ENCODE measurements at regions of chr1 and their contacts with region 1.

Region 1: DNA sequence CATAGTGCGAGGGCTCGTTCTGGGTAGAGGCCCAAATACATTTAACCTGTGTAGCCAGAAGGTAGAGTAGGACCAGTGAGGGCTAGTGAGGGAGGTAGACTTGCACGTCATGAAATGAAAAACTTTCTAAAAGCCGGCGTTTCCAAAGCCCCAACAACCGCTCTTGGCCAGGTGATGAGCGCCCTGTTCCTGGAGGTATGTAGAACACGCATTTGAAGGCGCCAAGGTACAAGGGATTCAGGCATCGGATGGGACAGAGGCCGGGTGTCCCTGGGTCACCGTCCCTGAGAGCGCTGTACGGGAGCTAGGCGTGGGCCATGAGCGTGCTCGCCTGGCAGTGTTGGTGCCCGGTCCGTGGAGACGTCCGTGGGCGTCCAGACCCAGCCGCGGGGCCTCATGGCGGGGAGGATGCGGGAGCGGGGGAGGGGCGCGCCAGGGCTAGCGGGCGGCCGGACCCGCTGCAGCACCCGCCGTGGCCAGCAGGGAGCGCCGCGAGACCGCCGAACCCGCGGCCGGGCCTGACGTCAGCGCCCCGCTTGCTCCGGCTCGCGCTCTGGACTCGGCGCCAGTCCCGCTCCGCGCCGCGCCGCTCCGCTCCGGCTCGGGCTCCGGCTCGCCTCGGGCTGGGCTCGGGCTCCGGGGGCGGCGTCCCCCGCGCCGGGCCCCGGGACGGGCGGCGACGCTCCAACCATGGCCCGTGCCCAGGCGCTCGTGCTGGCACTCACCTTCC is at the start of gene PTPRU:
- DNase-seq: peak; percentile 65
- H3K4me3 Mint-ChIP-seq: peak within 1 kb of the TSS; percentile 93
- H3K27ac Mint-ChIP-seq: peak within 1 kb of the TSS; percentile 61
- H3K4me1 Mint-ChIP-seq: peaks cover 27% of the 10 kb centered on the region
- H3K27me3 Mint-ChIP-seq: peaks cover 14% of the 10 kb centered on the region
- CTCF ChIP-seq: peak; percentile 84
- total RNA-seq, gene PTPRU: 24.1 and 26.8 TPM in 2 replicates

Region 2: GRCh38 chr1:29271724-29272123 is 35.6 kb after region 1 on chr1:
- CTCF ChIA-PET with region 1: interaction called, 3 read pairs
- POLR2A ChIA-PET with region 1: interaction called, 14 read pairs
- intact Hi-C with region 1: no loop called
- DNase-seq: peak; percentile 70
- H3K4me3 Mint-ChIP-seq: peak overlapping the region; percentile 33
- H3K27ac Mint-ChIP-seq: peak overlapping the region; percentile 76
- H3K4me1 Mint-ChIP-seq: peaks cover 18% of the 10 kb centered on the region
- H3K27me3 Mint-ChIP-seq: no peaks in the 10 kb centered on the region
- CTCF ChIP-seq: no peak

Region 3: DNA sequence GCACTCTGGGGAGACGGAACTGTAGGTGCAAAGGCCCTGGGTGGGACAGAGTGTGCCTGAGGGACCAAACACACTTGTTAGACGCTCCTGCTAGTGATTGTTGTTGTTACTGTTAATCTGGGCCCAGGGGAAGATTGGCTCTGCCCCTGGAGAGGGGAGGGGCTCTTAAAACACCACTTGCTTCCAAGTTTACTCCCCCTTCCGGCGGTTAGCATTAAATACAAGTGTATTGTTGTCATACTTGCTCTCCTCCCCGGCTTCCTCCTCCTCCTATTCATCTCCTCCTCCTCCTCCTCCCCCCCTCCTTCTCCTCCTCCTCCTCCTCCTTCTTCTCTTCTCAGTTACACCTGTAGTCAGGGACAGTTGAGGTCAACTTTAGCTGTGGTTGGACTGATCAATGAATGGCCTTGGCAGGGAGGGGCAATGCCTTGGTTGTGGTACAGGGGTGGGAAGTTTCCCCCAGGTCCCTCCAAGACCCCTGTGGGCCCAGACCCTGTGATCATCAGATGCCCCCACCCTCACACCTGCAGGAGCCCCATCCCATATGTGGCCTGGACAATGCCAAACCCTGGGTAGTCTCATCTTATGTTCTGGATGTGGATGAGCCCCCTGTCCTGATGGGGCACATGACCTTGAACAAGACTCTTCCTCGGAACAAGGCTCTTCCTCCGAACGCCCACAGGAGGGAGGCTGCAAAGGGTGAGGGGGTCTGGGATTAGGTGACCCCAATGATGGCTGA is 217.6 kb after region 1 on chr1:
- CTCF ChIA-PET with region 1: no interaction called
- POLR2A ChIA-PET with region 1: no interaction called
- intact Hi-C with region 1: loop called (anchors 1 kb)
- DNase-seq: peak; percentile 70
- H3K4me3 Mint-ChIP-seq: no peak overlapping the region
- H3K27ac Mint-ChIP-seq: no peak overlapping the region
- H3K4me1 Mint-ChIP-seq: no peaks in the 10 kb centered on the region
- H3K27me3 Mint-ChIP-seq: peaks cover 32% of the 10 kb centered on the region
- CTCF ChIP-seq: peak; percentile 33

Region 4: GRCh38 chr1:29875557-29876028 is 639.5 kb after region 1 on chr1:
- CTCF ChIA-PET with region 1: interaction called, 6 read pairs
- POLR2A ChIA-PET with region 1: interaction called, 3 read pairs
- intact Hi-C with region 1: loop called (anchors 2 kb)
- DNase-seq: peak; percentile 65
- H3K4me3 Mint-ChIP-seq: no peak overlapping the region
- H3K27ac Mint-ChIP-seq: no peak overlapping the region
- H3K4me1 Mint-ChIP-seq: peaks cover 6% of the 10 kb centered on the region
- H3K27me3 Mint-ChIP-seq: peaks cover 20% of the 10 kb centered on the region
- CTCF ChIP-seq: no peak

Region 5: GRCh38 chr1:30707412-30708360 is 1471.6 kb after region 1 on chr1:
- CTCF ChIA-PET with region 1: interaction called, 3 read pairs
- POLR2A ChIA-PET with region 1: interaction called, 5 read pairs
- intact Hi-C with region 1: loop called (anchors 1 kb)
- DNase-seq: peak; percentile 75
- H3K4me3 Mint-ChIP-seq: no peak overlapping the region
- H3K27ac Mint-ChIP-seq: no peak overlapping the region
- H3K4me1 Mint-ChIP-seq: peaks cover 5% of the 10 kb centered on the region
- H3K27me3 Mint-ChIP-seq: peaks cover 11% of the 10 kb centered on the region
- CTCF ChIP-seq: peak; percentile 97